Calu3 (cell line): ENCODE measurements at regions of chrX and their contacts with region 1.

Region 1: GRCh38 chrX:26262121-26262523 is 46.2 kb downstream of the MAGEB5 start:
- DNase-seq: peak; percentile 18
- H3K4me3 Mint-ChIP-seq: no peak overlapping the region
- H3K27ac Mint-ChIP-seq: peak overlapping the region; percentile 97
- H3K4me1 Mint-ChIP-seq: peaks cover 19% of the 10 kb centered on the region
- H3K27me3 Mint-ChIP-seq: no peaks in the 10 kb centered on the region
- CTCF ChIP-seq: no peak

Region 2: DNA sequence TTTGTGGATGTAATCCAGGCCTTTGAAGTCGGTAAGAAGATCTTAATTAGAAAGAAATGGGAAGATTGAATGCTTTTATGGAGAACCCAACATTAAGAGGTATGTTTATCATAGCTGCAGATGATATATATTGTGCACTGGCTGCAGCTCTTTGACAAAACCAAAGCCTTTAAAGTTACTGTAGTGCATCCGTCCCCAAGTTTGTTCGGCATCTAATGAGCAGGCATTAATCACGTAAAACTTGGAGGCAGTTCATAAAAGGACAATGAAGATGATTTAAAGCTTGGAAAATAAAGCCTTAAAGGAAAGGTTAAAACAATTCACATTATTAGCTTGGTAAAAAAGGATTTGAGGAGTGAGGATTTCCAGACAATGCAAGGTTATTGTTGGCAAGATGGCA is 1095.6 kb before region 1 on chrX:
- CTCF ChIA-PET with region 1: no interaction called
- intact Hi-C with region 1: no loop called
- DNase-seq: no peak
- H3K4me3 Mint-ChIP-seq: no peak overlapping the region
- H3K27ac Mint-ChIP-seq: no peak overlapping the region
- H3K4me1 Mint-ChIP-seq: no peaks in the 10 kb centered on the region
- H3K27me3 Mint-ChIP-seq: peaks cover 39% of the 10 kb centered on the region
- CTCF ChIP-seq: no peak

Region 3: GRCh38 chrX:25858273-25858880 is 403.7 kb before region 1 on chrX:
- CTCF ChIA-PET with region 1: no interaction called
- intact Hi-C with region 1: loop called (anchors 5 kb)
- DNase-seq: no peak
- H3K4me3 Mint-ChIP-seq: no peak overlapping the region
- H3K27ac Mint-ChIP-seq: no peak overlapping the region
- H3K4me1 Mint-ChIP-seq: peaks cover 11% of the 10 kb centered on the region
- H3K27me3 Mint-ChIP-seq: no peaks in the 10 kb centered on the region
- CTCF ChIP-seq: no peak

Region 4: GRCh38 chrX:26050099-26050498 is 212.0 kb before region 1 on chrX:
- CTCF ChIA-PET with region 1: no interaction called
- intact Hi-C with region 1: loop called (anchors 5 kb)
- DNase-seq: no peak
- H3K4me3 Mint-ChIP-seq: no peak overlapping the region
- H3K27ac Mint-ChIP-seq: peak overlapping the region; percentile 86
- H3K4me1 Mint-ChIP-seq: peaks cover 28% of the 10 kb centered on the region
- H3K27me3 Mint-ChIP-seq: no peaks in the 10 kb centered on the region
- CTCF ChIP-seq: no peak

Region 5: DNA sequence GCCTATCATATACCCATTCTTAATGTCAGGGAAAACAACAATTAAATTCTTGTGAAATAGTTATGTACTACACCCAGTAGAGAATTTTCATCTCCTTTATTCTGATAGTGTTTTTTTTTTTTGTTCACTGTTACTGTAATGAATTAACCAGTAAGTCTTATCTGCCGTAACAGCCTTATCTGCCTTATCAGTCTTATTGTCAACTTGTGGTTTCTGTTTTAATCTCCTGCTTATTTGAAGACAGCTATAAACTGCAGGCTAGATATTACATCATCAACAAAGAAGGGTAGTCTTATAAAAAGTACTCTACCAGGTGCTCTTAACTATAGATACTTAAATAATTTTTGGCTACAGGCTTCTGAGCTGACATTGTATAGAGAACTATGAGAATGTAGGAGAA is 33.3 kb after region 1 on chrX:
- CTCF ChIA-PET with region 1: no interaction called
- intact Hi-C with region 1: loop called (anchors 5 kb)
- DNase-seq: no peak
- H3K4me3 Mint-ChIP-seq: no peak overlapping the region
- H3K27ac Mint-ChIP-seq: no peak overlapping the region
- H3K4me1 Mint-ChIP-seq: peaks cover 8% of the 10 kb centered on the region
- H3K27me3 Mint-ChIP-seq: no peaks in the 10 kb centered on the region
- CTCF ChIP-seq: no peak